ENCODE measurements at regions of chr1 and their contacts with region 1.

Region 1: DNA sequence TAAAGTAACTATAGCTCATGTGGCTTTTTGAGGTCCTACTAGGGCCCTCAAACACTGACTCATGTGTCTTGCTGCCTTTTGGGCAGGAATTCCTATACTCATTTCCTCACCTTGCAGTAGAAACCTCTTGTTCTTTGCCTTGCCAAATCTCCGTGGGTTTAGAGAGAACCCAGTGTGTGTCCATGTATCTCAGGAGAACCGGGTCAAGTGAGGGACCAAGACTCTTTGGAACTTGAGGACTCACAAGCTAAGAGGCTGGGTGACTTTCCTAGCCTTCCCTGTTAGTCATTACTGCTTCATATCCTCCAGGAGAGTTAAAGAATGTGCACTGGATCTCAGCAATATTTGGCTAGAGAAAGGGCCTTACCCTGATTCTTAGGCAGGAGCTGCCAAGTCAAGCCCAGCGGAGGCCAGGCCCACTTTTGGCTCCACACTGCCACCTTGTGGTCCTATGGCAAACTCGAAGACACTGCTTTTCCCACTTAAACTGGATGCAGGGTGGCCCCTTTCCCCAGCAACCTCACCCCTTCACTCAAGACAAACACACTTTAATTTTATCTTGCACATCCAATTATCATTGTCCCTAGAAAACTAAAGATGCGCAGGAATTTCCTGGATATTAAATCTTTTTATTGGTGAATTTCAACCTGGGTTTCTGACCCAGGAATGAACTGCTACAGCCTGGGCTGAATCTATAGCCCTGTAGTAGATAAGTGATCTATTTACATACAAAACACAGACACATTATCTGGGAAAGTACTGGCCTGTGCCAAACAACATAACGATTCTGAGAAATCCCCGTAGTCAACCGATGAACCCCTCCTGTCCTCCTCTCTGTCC is 10.6 kb downstream of the AVPR1B start:
- DNase-seq: peak; percentile 60 to 97 (median 86)

Region 2: DNA sequence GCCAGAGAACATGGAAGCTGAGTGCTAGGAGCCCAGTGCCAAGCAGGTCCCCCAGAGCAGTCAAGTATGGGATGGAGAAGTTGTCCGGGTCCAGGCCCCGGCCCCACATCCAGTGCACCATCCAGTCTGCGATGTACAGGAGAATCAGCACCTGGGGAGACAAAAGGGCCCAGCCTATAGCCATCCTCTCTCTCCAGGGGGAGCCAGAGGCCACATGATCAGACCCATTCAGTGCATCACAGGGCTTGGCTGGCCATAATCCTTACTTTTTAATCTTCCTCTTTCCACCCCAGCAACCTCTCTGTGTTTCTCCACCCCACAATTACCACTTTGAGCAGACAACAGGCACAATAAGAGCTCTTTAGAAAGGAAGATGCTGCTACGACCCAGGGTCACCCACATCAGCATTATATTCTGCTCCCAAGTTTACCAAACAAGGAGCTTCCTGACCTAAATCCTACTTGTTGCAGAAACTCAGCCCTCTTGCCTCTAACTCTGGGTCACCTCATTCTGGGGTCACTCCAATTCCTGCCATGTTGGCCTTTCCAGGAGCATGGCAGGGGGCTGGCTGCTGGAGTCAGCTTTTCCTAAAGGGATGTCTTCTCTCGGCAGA is 314.9 kb before region 1 on chr1:
- intact Hi-C with region 1: loop called (anchors 10 kb)
- DNase-seq: peak; percentile 42 to 95 (median 78)

Region 3: DNA sequence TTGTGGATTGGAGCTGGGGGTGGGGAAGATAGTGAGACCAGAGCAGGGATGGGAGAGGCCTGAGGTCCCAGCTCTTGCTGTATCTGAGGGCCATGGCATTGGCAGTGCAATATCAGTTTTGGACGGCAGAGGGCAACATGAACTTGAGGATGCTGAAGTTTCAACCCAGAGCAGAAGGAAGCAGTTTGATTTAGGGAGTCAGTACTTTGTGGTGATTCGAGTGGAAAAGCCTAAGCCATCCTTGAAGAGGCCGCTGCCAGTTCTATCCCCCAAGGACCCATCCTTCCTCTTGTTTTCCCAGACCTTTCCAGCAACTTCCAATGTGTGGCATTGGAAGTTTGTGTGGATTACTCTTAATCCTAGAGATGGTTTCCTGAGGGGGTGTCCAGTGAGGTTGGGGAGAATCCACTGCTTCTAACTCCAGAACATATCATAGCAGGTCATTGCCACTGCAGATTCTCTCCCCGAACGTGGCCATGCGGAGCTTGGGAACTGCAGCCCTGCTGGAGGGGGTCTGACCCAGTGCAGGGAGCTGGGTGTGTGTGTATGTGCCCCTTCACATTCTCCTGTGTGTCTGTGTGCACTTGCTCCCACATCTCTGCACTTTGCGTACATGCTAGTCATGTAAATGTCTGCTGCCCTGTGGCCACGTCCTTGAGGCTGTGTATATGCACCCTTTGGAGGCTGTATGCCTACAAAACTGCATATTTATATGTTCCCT is 187.4 kb before region 1 on chr1:
- intact Hi-C with region 1: loop called (anchors 5 kb)
- DNase-seq: peak; percentile 72 to 97 (median 90)

Region 4: GRCh38 chr1:205983925-205984725 is 122.4 kb before region 1 on chr1:
- intact Hi-C with region 1: loop called (anchors 1 kb)
- DNase-seq: peak; percentile 52 to 97 (median 80)

Region 5: GRCh38 chr1:206030714-206031113 is 75.8 kb before region 1 on chr1:
- intact Hi-C with region 1: loop called (anchors 5 kb)
- DNase-seq: peak; percentile 45 to 95 (median 72)

Measured in posterior cingulate gyrus (tissue), 11 donors.